ENCODE measurements at regions of chr12 and their contacts with region 1.

Region 1: DNA sequence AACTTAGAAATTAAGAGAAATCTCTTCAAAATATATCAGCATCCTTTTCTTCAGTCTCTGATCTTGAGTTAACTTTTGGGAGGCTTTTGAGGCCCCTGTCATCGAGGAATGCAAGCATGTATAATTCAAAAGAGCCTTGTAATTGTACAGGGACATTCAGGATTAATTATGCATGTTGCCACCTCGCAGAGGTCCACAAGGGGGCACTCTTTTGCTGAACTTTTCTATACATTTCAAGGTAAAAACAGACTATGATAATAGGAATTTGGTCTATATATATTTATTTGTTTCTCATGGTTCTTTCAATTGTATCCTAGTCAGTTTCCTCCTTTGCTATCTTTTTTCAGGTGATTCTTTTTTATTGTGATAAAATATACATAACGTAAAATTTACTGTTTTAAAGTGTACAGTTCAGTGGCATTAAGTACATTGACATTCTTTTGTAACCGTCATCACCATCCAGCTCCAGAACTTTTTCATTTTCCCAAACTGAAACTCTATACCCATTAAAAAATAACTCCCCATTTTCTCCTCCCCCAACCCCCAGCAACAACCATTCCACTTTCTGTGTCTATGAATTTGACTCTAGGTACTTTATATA is 47.0 kb upstream of the SLC2A13 start:
- DNase-seq: peak; percentile 84
- H3K4me3 Mint-ChIP-seq: no peak overlapping the region
- H3K27ac Mint-ChIP-seq: no peak overlapping the region
- H3K4me1 Mint-ChIP-seq: no peaks in the 10 kb centered on the region
- H3K27me3 Mint-ChIP-seq: peaks cover 36% of the 10 kb centered on the region

Region 2: GRCh38 chr12:39958377-39958776 is 194.5 kb before region 1 on chr12:
- intact Hi-C with region 1: no loop called
- DNase-seq: peak; percentile 57
- H3K4me3 Mint-ChIP-seq: no peak overlapping the region
- H3K27ac Mint-ChIP-seq: no peak overlapping the region
- H3K4me1 Mint-ChIP-seq: no peaks in the 10 kb centered on the region
- H3K27me3 Mint-ChIP-seq: peaks cover 2% of the 10 kb centered on the region

Region 3: DNA sequence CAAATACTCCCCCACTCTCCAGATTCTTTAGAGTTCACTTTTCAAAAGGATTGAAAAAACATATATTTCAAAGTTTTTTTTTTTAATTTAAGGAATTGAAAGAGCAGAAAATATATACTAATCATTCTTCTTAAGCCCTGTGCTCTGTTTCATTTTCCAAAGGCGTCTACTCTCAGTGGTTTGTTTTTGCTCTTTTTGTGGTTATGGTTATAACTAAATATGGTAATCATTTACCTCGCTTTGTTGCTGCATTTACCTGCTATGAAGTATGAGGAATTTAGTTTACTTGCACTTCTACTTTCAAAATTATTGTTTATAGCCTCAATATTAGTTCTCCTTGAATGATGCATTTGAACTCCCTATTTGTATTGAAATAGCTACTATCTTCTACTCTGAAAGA is 16.0 kb after region 1 on chr12:
- intact Hi-C with region 1: loop called (anchors 2 kb)
- DNase-seq: peak; percentile 65
- H3K4me3 Mint-ChIP-seq: peak overlapping the region; percentile 57
- H3K27ac Mint-ChIP-seq: peak overlapping the region; percentile 63
- H3K4me1 Mint-ChIP-seq: peaks cover 19% of the 10 kb centered on the region
- H3K27me3 Mint-ChIP-seq: peaks cover 26% of the 10 kb centered on the region

Region 4: GRCh38 chr12:40312982-40313576 is 160.2 kb after region 1 on chr12:
- intact Hi-C with region 1: loop called (anchors 1 kb)
- DNase-seq: no peak
- H3K4me3 Mint-ChIP-seq: no peak overlapping the region
- H3K27ac Mint-ChIP-seq: no peak overlapping the region
- H3K4me1 Mint-ChIP-seq: no peaks in the 10 kb centered on the region
- H3K27me3 Mint-ChIP-seq: peaks cover 1% of the 10 kb centered on the region

Region 5: GRCh38 chr12:40375076-40375475 is 222.2 kb after region 1 on chr12:
- intact Hi-C with region 1: loop called (anchors 5 kb)
- DNase-seq: no peak
- H3K4me3 Mint-ChIP-seq: no peak overlapping the region
- H3K27ac Mint-ChIP-seq: no peak overlapping the region
- H3K4me1 Mint-ChIP-seq: no peaks in the 10 kb centered on the region
- H3K27me3 Mint-ChIP-seq: no peaks in the 10 kb centered on the region

Region 6: DNA sequence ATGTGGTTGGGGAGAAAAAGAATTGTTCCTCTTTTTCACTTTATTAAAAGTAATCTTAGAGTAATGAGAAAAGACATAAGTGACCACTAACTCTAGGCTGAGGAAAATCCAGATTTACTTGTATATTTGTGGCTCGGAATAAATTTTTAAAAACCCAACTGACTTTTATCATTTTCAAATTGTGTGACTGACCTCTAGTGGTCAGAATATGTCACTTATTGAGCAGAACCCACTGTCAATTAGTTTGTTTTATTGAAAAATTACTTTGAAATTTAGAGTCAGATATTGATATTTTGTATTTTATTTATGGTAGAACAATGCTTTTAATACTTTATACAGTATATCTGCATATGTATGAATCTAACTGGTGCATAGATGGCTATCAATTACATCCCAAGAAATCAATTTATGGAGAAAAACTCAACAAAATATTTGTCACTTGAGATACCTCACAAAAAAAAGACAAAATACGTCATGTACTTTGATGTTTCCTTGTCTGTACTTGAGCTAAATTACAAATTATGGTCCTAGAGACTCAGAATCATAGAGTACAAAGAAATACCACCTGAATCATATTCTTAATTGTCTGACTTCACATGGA is 768.8 kb after region 1 on chr12:
- intact Hi-C with region 1: loop called (anchors 10 kb)
- DNase-seq: no peak
- H3K4me3 Mint-ChIP-seq: no peak overlapping the region
- H3K27ac Mint-ChIP-seq: no peak overlapping the region
- H3K4me1 Mint-ChIP-seq: no peaks in the 10 kb centered on the region
- H3K27me3 Mint-ChIP-seq: no peaks in the 10 kb centered on the region